ENCODE measurements at regions of chr20 and their contacts with region 1.

Region 1: GRCh38 chr20:32470025-32470861 is 112.1 kb downstream of the ASXL1 start:
- DNase-seq: peak; percentile 67
- ATAC-seq: peak; percentile 69
- H3K4me3 Mint-ChIP-seq: no peak overlapping the region
- H3K27ac Mint-ChIP-seq: peak overlapping the region; percentile 92
- H3K4me1 Mint-ChIP-seq: peaks cover 19% of the 10 kb centered on the region
- H3K27me3 Mint-ChIP-seq: no peaks in the 10 kb centered on the region
- CTCF ChIP-seq: peak; percentile 51

Region 2: DNA sequence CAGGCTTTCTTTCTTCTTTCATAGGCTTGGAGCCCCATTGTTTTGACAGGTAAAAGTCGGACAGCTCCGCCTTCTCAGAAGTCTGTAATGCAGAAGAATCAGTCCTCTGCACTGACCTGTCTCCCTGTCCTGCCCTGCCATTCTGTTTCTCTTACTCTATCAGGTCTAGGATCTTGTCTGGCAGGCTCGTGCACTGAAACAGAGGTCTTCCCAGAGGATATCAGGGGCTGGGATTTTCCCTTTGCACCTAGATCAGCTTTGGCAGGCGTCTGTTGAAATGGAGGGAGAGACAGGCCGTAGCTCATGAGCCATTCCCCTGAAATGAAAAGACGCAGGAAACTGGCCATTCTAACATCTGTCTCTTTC is 167.8 kb before region 1 on chr20:
- CTCF ChIA-PET with region 1: no interaction called
- POLR2A ChIA-PET with region 1: no interaction called
- DNase-seq: no peak
- ATAC-seq: no peak
- H3K4me3 Mint-ChIP-seq: no peak overlapping the region
- H3K27ac Mint-ChIP-seq: no peak overlapping the region
- H3K4me1 Mint-ChIP-seq: peaks cover 4% of the 10 kb centered on the region; the same call in 1 of the 2 replicates
- H3K27me3 Mint-ChIP-seq: no peaks in the 10 kb centered on the region
- CTCF ChIP-seq: no peak

Region 3: DNA sequence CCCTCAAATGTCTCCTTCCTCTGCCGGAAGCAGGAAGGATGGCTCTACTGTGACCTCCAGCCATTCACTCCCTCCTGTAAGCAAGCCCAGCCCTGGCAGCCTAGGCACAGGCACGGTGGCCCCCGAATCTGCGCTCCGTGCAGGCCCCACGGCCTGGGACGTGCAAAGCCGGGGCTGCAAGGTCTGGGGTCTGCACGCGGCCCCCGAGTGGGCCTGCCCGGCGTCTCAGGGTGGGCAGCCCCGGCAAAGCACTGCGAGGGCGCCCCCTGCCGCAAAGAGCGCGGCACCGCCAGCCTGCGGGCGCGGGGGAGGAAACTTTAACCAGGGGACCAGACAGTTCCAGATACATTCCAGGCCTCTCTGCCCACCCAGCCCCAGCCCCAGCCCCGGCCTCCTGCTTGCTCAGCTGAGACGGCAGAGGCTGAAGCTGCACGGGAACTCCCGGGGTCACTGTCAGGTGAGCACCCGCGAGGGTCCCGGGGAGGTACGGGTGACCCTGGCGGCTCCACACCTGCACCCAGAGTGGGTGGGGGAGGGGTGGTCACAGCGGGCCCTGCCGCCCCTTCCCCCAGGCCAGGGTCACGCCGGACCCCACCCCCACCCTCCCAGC is 13.3 kb before region 1 on chr20:
- CTCF ChIA-PET with region 1: interaction called, 10 read pairs
- POLR2A ChIA-PET with region 1: interaction called, 3 read pairs
- DNase-seq: peak; percentile 86
- ATAC-seq: peak; percentile 65
- H3K4me3 Mint-ChIP-seq: peak overlapping the region; percentile 59
- H3K27ac Mint-ChIP-seq: no peak overlapping the region
- H3K4me1 Mint-ChIP-seq: peaks cover 13% of the 10 kb centered on the region
- H3K27me3 Mint-ChIP-seq: no peaks in the 10 kb centered on the region
- CTCF ChIP-seq: peak; percentile 89

Region 4: DNA sequence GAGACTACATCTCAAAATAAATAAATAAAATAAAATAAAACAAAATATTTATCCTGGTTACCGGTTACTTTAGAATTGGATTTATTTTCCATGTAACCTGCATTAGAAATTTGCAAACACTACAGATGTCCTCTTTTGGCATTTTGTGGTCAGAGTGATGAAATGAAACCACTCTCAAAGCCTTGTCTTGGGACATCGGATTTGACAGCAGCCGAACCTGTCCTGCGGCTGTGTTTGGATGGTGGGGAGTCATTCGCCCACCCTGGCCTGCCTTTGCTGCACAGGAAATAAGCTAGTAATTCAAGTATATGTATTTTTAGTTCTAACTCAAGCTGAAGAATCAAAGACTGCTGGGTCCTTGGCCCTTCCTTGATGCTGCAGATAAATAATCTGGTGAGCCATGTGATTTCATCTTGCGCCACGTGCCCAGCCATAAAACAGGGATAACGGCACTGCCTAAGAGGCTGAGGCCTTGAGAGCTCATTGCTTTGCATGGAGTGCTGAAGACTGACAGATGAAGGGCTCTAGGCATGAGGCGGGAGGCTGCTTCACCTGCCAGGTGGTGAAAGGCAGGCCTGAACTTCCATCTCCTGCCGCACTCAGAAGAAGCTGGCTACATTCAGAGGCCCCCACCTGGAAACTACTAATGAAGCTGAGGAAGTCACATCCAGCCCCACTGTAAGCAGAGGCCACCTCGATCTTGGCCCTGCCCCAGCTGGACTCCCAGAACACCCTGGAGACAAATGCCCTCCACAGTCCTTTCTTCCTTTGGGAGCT is 37.9 kb after region 1 on chr20:
- CTCF ChIA-PET with region 1: interaction called, 11 read pairs
- POLR2A ChIA-PET with region 1: no interaction called
- DNase-seq: no peak
- ATAC-seq: no peak
- H3K4me3 Mint-ChIP-seq: no peak overlapping the region
- H3K27ac Mint-ChIP-seq: no peak overlapping the region
- H3K4me1 Mint-ChIP-seq: peaks cover 45% of the 10 kb centered on the region
- H3K27me3 Mint-ChIP-seq: no peaks in the 10 kb centered on the region
- CTCF ChIP-seq: no peak